ENCODE measurements at regions of chr3 and their contacts with region 1.

Region 1: GRCh38 chr3:71064288-71064955 is 519.1 kb downstream of the FOXP1 start:
- DNase-seq: peak; percentile 56 to 70
- H3K4me3 ChIP-seq: peak overlapping the region; percentile 58
- H3K4me3 Mint-ChIP-seq: no peak overlapping the region
- H3K27ac Mint-ChIP-seq: no peak overlapping the region
- H3K4me1 ChIP-seq: peaks cover 55% of the 10 kb centered on the region
- H3K4me1 Mint-ChIP-seq: peaks cover 44% of the 10 kb centered on the region
- H3K27me3 ChIP-seq: no peaks in the 10 kb centered on the region
- H3K27me3 Mint-ChIP-seq: no peaks in the 10 kb centered on the region
- CTCF ChIP-seq: no peak

Region 2: DNA sequence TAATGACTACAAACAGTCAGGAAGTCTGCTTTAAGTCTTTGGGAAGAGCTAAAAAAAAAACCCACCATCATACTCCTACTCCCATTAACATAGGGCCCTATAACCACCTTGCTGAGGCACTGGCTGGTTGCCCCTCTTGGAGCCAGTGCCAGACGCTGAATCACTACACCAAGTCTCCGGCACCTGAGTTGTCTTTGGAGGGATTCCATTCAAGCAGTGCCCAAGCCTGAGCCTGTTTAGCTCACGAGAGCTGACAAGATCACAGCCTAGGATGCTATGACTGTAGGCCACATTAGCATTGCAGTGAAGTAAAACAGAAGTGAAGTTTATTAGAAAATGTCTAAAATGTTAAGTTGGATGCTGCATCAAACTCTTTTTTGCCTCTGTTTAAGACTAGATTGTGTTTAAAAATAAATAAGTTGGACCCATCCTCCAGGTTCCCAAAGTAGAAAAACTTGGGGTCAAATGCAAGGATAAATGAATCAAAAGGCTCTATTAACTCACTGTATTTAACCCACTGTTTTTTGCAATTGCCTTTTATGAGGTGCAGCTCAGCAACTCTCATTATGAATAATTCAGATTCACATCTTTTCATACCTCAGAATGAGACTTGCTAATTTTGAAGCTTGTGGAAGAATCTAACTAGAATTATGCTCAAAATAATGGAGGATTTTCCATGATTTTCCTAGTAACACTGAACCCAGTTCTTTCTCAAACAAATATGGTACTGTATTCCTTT is 57.2 kb after region 1 on chr3:
- CTCF ChIA-PET with region 1: no interaction called
- POLR2A ChIA-PET with region 1: no interaction called
- intact Hi-C with region 1: loop called (anchors 2 kb)
- DNase-seq: no peak
- H3K4me3 ChIP-seq: no peak overlapping the region
- H3K4me3 Mint-ChIP-seq: no peak overlapping the region
- H3K27ac Mint-ChIP-seq: peak overlapping the region; percentile 71
- H3K4me1 ChIP-seq: peaks cover 57% of the 10 kb centered on the region
- H3K4me1 Mint-ChIP-seq: peaks cover 52% of the 10 kb centered on the region
- H3K27me3 ChIP-seq: no peaks in the 10 kb centered on the region
- H3K27me3 Mint-ChIP-seq: no peaks in the 10 kb centered on the region
- CTCF ChIP-seq: no peak

Region 3: GRCh38 chr3:71191031-71191482 is 126.6 kb after region 1 on chr3:
- CTCF ChIA-PET with region 1: no interaction called
- POLR2A ChIA-PET with region 1: no interaction called
- intact Hi-C with region 1: loop called (anchors 2 kb)
- DNase-seq: peak; percentile 75 to 77
- H3K4me3 ChIP-seq: no peak overlapping the region
- H3K4me3 Mint-ChIP-seq: no peak overlapping the region
- H3K27ac Mint-ChIP-seq: peak overlapping the region; percentile 74
- H3K4me1 ChIP-seq: peaks cover 59% of the 10 kb centered on the region
- H3K4me1 Mint-ChIP-seq: peaks cover 52% of the 10 kb centered on the region
- H3K27me3 ChIP-seq: no peaks in the 10 kb centered on the region
- H3K27me3 Mint-ChIP-seq: no peaks in the 10 kb centered on the region
- CTCF ChIP-seq: peak in 1 of 2 experiments; percentile 5

Region 4: GRCh38 chr3:71416876-71417275 is 352.5 kb after region 1 on chr3:
- CTCF ChIA-PET with region 1: no interaction called
- POLR2A ChIA-PET with region 1: no interaction called
- intact Hi-C with region 1: loop called (anchors 5 kb)
- DNase-seq: peak; percentile 61 to 67
- H3K4me3 ChIP-seq: no peak overlapping the region
- H3K4me3 Mint-ChIP-seq: peak overlapping the region; percentile 63
- H3K27ac Mint-ChIP-seq: peak overlapping the region; percentile 96
- H3K4me1 ChIP-seq: peaks cover 38% of the 10 kb centered on the region
- H3K4me1 Mint-ChIP-seq: peaks cover 44% of the 10 kb centered on the region
- H3K27me3 ChIP-seq: no peaks in the 10 kb centered on the region
- H3K27me3 Mint-ChIP-seq: no peaks in the 10 kb centered on the region
- CTCF ChIP-seq: peak; percentile 35 to 39